A549 (cell line): ENCODE measurements at regions of chr21 and their contacts with region 1.

Region 1: GRCh38 chr21:41777951-41778874 is 11.4 kb upstream of the RIPK4 start:
- DNase-seq: peak in 1 of 2 experiments; percentile 85
- ATAC-seq: peak; percentile 96 to 99
- H3K4me3 ChIP-seq: no peak overlapping the region
- H3K27ac ChIP-seq: peak overlapping the region; percentile 67 to 87
- H3K4me1 ChIP-seq: peaks cover 20% of the 10 kb centered on the region
- CTCF ChIP-seq: peak; percentile 62
- EP300 ChIP-seq: no peak
- POLR2A ChIP-seq: no peak
- RAD21 ChIP-seq: peak; percentile 87

Region 2: DNA sequence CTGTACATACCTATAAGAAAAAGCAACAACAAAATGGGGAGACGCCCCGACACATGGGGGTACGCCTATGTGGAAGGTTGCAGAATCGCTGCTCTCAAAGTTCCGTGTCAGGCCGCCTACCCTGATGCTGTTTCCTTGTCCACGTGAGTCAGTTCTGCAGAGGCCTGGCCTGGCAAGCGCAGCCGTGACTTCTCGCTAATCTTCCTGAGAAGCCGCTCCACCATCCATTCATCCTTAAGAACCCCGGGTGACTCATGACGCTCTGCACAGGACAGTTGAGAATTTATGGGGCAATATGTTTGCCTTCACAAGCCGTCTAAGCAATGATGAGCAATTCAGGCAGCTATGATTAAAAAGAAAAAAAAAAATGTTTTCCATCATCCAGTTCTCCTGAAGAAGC is 148.0 kb before region 1 on chr21:
- CTCF ChIA-PET with region 1: interaction called, 24 read pairs
- POLR2A ChIA-PET with region 1: no interaction called
- DNase-seq: peak; percentile 85 to 98
- ATAC-seq: peak; percentile 94 to 95
- H3K4me3 ChIP-seq: no peak overlapping the region
- H3K27ac ChIP-seq: peak overlapping the region; percentile 85 to 94
- H3K4me1 ChIP-seq: peaks cover 54% of the 10 kb centered on the region
- CTCF ChIP-seq: no peak
- EP300 ChIP-seq: peak; percentile 74 to 84; a peak in 3 of 5 replicates
- POLR2A ChIP-seq: no peak
- RAD21 ChIP-seq: peak in 1 of 2 experiments; percentile 30; a peak in 3 of 5 replicates

Region 3: DNA sequence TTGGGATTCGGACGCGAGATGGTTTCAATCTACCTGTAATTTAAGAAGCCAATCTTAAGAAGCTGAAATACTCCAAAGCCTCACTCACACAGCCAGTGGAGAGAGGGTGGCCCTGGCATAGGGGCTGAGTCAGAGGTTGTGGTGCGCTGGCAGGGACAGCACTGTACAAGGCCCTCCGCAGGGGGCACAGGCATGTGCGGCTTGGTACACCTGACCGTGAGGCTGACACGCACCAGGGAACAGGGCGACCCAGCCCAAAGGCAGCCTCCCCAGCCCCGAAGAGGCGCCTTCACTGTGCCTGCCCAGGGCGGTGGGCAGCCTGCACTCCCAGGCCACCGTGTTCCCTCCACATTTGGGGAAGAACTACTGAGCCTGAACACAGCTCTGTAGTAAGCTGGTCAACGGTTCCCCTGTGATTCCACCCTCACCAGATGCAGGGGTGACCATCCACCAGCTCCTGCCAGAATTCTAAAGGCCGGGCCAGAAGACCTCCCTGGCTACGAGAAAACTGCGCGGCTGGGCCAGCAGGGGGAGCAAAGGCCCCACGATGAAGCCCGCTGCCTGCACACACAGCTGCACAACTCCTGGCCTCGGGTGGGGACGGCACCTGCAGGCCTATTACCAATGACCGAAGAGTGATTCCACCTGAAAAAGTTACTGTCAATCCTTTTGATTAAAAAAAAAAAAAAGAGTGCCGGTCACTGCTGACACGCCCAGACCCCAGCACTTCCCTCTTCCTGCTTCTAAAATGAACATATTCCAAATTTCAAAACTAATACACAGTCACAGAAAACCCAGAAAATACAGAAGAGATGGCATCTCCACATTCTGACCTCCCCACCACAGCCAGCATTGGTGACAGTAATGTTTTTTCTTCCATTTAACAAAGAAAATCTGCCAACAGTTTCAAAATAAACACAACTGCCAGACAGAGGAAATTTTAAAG is 38.3 kb after region 1 on chr21:
- CTCF ChIA-PET with region 1: interaction called, 14 read pairs
- POLR2A ChIA-PET with region 1: no interaction called
- DNase-seq: peak; percentile 19 to 40
- ATAC-seq: peak; percentile 87 to 93
- H3K4me3 ChIP-seq: no peak overlapping the region
- H3K27ac ChIP-seq: no peak overlapping the region
- H3K4me1 ChIP-seq: no peaks in the 10 kb centered on the region
- CTCF ChIP-seq: peak; percentile 45
- EP300 ChIP-seq: no peak
- POLR2A ChIP-seq: no peak
- RAD21 ChIP-seq: peak; percentile 45 to 65; a peak in 4 of 5 replicates

Region 4: GRCh38 chr21:41847066-41847804 is 69.0 kb after region 1 on chr21:
- CTCF ChIA-PET with region 1: no interaction called
- POLR2A ChIA-PET with region 1: no interaction called
- DNase-seq: no peak
- ATAC-seq: peak; percentile 55 to 59; a peak in 4 of 6 replicates
- H3K4me3 ChIP-seq: no peak overlapping the region
- H3K27ac ChIP-seq: no peak overlapping the region
- H3K4me1 ChIP-seq: 0 out of 3 replicates have a peak, but pooled peaks cover 9% of the 10 kb centered on the region
- CTCF ChIP-seq: no peak
- EP300 ChIP-seq: no peak
- POLR2A ChIP-seq: no peak
- RAD21 ChIP-seq: no peak

Region 5: GRCh38 chr21:42923541-42924432 is 1145.6 kb after region 1 on chr21:
- CTCF ChIA-PET with region 1: no interaction called
- POLR2A ChIA-PET with region 1: no interaction called
- DNase-seq: peak; percentile 75 to 83
- ATAC-seq: peak; percentile 77 to 94; a peak in 5 of 6 replicates
- H3K4me3 ChIP-seq: no peak overlapping the region
- H3K27ac ChIP-seq: peak overlapping the region; percentile 55 to 86
- H3K4me1 ChIP-seq: peaks cover 6% of the 10 kb centered on the region; the same call in 1 of the 3 replicates
- CTCF ChIP-seq: peak; percentile 59
- EP300 ChIP-seq: no peak
- POLR2A ChIP-seq: no peak
- RAD21 ChIP-seq: peak; percentile 79 to 83